ENCODE measurements at regions of chr11 and their contacts with region 1.

Region 1: GRCh38 chr11:96389720-96390487 is at the starts of genes CCDC82 and JRKL:
- DNase-seq: peak; percentile 99
- H3K4me3 Mint-ChIP-seq: peak within 1 kb of the TSS; percentile 89
- H3K27ac Mint-ChIP-seq: peak within 1 kb of the TSS; percentile 91
- H3K4me1 Mint-ChIP-seq: peaks cover 58% of the 10 kb centered on the region
- H3K27me3 Mint-ChIP-seq: no peaks in the 10 kb centered on the region
- total RNA-seq, gene CCDC82: 32.0 to 34.0 TPM
- total RNA-seq, gene JRKL: 12.3 to 12.7 TPM

Region 2: GRCh38 chr11:95835768-95836488 is 554.0 kb before region 1 on chr11:
- CTCF ChIA-PET with region 1: interaction called, 25 read pairs
- intact Hi-C with region 1: loop called (anchors 1 kb)
- DNase-seq: peak; percentile 77
- H3K4me3 Mint-ChIP-seq: no peak overlapping the region
- H3K27ac Mint-ChIP-seq: no peak overlapping the region
- H3K4me1 Mint-ChIP-seq: peaks cover 4% of the 10 kb centered on the region
- H3K27me3 Mint-ChIP-seq: no peaks in the 10 kb centered on the region

Region 3: DNA sequence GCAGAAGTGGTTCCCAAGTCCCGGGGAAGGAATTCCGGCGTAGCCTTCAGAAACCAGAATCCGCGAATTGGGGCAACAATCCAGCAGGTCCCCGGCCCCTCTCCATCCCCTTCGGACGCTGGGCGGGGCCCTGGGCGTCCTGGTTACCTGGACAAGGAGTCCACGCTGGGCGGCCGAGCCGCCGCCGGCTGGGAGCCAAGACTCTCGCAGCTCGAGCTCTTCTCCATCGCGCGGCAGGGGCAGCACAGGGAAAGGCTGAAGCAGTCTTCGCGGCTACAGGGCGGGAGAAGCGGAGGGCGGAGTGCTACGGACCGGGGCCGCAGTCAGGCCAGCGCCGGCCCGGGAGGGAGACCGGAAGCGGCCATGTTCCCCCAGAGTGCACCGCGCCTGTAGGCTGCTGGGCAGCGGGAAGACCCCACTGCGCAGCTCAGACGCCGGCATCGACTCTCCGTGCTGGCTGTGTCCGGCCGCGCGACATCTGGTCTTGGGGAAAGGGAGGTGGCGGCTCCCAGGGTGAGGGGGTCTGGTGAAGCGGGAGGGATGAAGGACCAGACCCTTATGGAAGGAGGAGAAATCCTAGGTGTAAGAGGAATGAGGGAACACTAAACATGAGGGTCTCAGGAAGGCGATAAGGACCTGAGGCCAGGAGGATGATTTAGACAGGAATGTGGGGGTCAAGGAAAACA is 466.0 kb before region 1 on chr11 and contains the start of gene MTMR2:
- CTCF ChIA-PET with region 1: no interaction called
- intact Hi-C with region 1: loop called (anchors 1 kb)
- DNase-seq: peak; percentile 62
- H3K4me3 Mint-ChIP-seq: peak within 1 kb of the TSS; percentile 94
- H3K27ac Mint-ChIP-seq: peak within 1 kb of the TSS; percentile 95
- H3K4me1 Mint-ChIP-seq: peaks cover 28% of the 10 kb centered on the region
- H3K27me3 Mint-ChIP-seq: no peaks in the 10 kb centered on the region
- total RNA-seq, gene MTMR2: 32.5 to 34.6 TPM

Region 4: GRCh38 chr11:96054870-96055705 is 334.8 kb before region 1 on chr11:
- CTCF ChIA-PET with region 1: interaction called, 5 read pairs
- intact Hi-C with region 1: loop called (anchors 1 kb)
- DNase-seq: no peak
- H3K4me3 Mint-ChIP-seq: no peak overlapping the region
- H3K27ac Mint-ChIP-seq: peak overlapping the region; percentile 87
- H3K4me1 Mint-ChIP-seq: peaks cover 81% of the 10 kb centered on the region
- H3K27me3 Mint-ChIP-seq: no peaks in the 10 kb centered on the region

Region 5: GRCh38 chr11:96155627-96156378 is 234.1 kb before region 1 on chr11:
- CTCF ChIA-PET with region 1: no interaction called
- intact Hi-C with region 1: loop called (anchors 5 kb)
- DNase-seq: peak; percentile 84
- H3K4me3 Mint-ChIP-seq: peak overlapping the region; percentile 38
- H3K27ac Mint-ChIP-seq: peak overlapping the region; percentile 96
- H3K4me1 Mint-ChIP-seq: peaks cover 69% of the 10 kb centered on the region
- H3K27me3 Mint-ChIP-seq: no peaks in the 10 kb centered on the region

Region 6: GRCh38 chr11:96254087-96254486 is 135.8 kb before region 1 on chr11:
- CTCF ChIA-PET with region 1: no interaction called
- intact Hi-C with region 1: loop called (anchors 5 kb)
- DNase-seq: peak; percentile 49
- H3K4me3 Mint-ChIP-seq: peak overlapping the region; percentile 58
- H3K27ac Mint-ChIP-seq: peak overlapping the region; percentile 77
- H3K4me1 Mint-ChIP-seq: peaks cover 89% of the 10 kb centered on the region
- H3K27me3 Mint-ChIP-seq: no peaks in the 10 kb centered on the region

Region 7: GRCh38 chr11:96366024-96366423 is 23.9 kb before region 1 on chr11:
- CTCF ChIA-PET with region 1: no interaction called
- intact Hi-C with region 1: no loop called
- DNase-seq: no peak
- H3K4me3 Mint-ChIP-seq: no peak overlapping the region
- H3K27ac Mint-ChIP-seq: no peak overlapping the region
- H3K4me1 Mint-ChIP-seq: no peaks in the 10 kb centered on the region
- H3K27me3 Mint-ChIP-seq: no peaks in the 10 kb centered on the region

Measured in activated naive CD4-positive, alpha-beta T cell treated with anti-CD3 and anti-CD28 coated beads for 36 hours (primary cell).